ENCODE measurements at regions of chr3 and their contacts with region 1.

Region 1: DNA sequence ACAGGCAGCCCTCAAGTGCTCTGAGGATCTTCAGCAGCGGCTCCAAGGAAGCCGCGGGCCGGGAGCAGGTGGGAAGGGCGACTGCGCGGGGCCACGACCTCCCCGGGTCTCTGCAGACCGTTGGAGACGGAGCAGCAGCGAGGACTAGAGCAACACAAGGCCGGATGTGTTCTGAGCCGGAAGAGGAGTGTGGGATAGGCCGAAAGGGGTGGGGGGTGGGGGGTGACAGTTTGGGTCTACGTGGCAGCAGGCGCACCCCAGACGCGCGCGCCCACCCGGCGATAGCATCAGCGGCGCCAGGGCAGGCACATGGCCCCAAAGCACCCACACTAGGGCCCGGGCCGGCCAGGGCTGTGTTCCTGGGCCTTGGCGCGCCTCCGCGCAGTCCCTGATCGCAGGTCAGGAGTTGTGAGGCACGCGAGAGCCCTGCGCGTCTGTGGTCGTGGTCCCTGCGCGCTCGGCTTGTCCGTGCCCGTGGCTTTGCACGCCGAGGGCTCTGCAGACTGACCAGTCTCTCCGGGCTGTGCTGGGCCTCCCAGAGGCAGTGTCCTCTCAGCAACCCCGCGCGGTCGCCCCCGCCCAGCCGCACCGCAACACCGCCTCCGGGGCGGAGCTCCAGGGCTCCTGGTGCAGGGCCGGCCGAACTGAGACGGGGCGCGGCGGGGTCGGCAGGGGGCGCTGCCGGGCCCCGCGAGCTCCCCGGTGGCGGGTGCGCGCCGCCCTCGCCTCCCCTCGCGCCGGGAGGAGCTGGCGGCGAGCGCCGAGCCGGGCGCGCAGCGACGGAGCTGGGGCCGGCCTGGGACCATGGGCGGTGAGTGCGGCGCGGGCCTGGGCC is at the start of gene PXYLP1:
- DNase-seq: peak; percentile 90 to 96 (median 94)
- H3K4me3 ChIP-seq: peak within 1 kb of the TSS; percentile 54
- H3K27ac ChIP-seq: peak within 1 kb of the TSS; percentile 70 to 79
- H3K4me1 ChIP-seq: peaks cover 6% of the 10 kb centered on the region
- H3K27me3 ChIP-seq: no peaks in the 10 kb centered on the region
- CTCF ChIP-seq: peak; percentile 46 to 90 (median 89)
- EP300 ChIP-seq: no peak
- POLR2A ChIP-seq: peak; percentile 39
- total RNA-seq, gene PXYLP1: 10.3 to 23.0 (median 15.7) TPM

Region 2: DNA sequence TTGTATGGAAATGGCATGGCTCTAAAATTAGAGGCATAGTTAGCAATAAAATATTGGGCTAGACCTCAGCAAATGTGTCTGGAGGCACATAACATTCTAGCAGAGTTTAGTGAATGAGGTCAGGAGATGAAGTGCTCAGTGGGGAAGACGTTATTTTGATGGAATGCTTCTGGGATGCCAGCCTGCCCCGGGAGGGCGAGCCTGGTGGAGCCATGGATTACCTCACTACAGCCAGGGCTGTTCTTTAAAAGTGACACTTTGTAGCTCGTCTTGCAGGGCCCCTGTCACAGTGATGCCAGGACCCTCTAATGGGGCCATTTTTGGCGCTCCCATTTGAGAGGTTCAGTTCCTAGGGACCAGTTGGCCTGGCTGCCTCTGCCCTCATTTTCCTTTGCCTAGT is 48.8 kb after region 1 on chr3:
- intact Hi-C with region 1: loop called in 1 of 4 experiments (anchors 10 kb)
- DNase-seq: no peak
- H3K4me3 ChIP-seq: no peak overlapping the region
- H3K27ac ChIP-seq: no peak overlapping the region
- H3K4me1 ChIP-seq: peaks cover 1% of the 10 kb centered on the region
- H3K27me3 ChIP-seq: no peaks in the 10 kb centered on the region
- CTCF ChIP-seq: no peak
- EP300 ChIP-seq: no peak
- POLR2A ChIP-seq: no peak

Region 3: DNA sequence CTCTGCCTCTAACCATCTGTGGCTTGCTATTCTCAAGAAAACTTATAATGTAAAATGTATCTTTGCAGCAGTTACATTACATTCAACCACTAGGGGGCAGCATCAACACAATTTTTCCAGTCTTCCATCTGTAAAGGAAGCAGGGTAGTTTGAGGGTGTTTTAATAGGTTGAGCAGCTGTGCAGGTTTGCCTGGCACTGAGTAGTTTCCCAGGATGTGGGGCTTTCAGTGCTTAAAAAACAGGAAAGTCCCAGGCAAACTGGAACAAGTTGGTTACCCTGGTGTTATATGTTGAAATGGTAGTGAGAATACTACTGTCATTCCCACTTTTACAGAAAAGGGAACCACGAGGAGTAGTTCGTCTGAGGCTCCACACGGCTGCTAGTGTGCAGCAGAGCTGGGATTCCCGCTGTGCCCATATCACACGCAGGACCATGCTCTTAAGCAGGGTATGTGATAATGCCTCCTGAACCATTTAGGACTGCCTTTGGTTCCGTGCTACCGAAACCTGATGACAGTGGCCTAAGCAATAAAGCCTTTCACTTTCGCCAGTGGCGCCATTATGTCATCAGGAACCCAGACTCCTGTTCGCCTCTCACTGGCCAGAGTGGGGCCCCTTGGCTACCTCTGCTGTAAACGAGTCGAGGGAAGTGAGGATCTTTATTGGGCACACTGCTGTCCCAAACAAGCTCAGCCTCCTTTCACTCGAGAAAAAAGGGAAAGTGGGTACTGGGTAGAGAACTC is 72.3 kb after region 1 on chr3:
- intact Hi-C with region 1: loop called (anchors 5 to 10 kb)
- DNase-seq: peak in 2 of 5 donors; percentile 35 to 63
- H3K4me3 ChIP-seq: no peak overlapping the region
- H3K27ac ChIP-seq: no peak overlapping the region
- H3K4me1 ChIP-seq: no peaks in the 10 kb centered on the region
- H3K27me3 ChIP-seq: no peaks in the 10 kb centered on the region
- CTCF ChIP-seq: peak; percentile 52 to 75 (median 61)
- EP300 ChIP-seq: no peak
- POLR2A ChIP-seq: no peak

Region 4: GRCh38 chr3:141311496-141312353 is 80.4 kb after region 1 on chr3:
- intact Hi-C with region 1: loop called in 2 of 4 experiments (anchors 5 to 10 kb)
- DNase-seq: peak; percentile 97 to 98 (median 98)
- H3K4me3 ChIP-seq: peak overlapping the region; percentile 64
- H3K27ac ChIP-seq: peak overlapping the region in 1 of 2 donors; percentile 54
- H3K4me1 ChIP-seq: peaks cover 5% of the 10 kb centered on the region
- H3K27me3 ChIP-seq: no peaks in the 10 kb centered on the region
- CTCF ChIP-seq: peak; percentile 56 to 81 (median 79)
- EP300 ChIP-seq: no peak
- POLR2A ChIP-seq: peak; percentile 55

Region 5: GRCh38 chr3:141460097-141460704 is 228.9 kb after region 1 on chr3:
- intact Hi-C with region 1: loop called in 2 of 4 experiments (anchors 10 kb)
- DNase-seq: peak; percentile 84 to 92 (median 90)
- H3K4me3 ChIP-seq: no peak overlapping the region
- H3K27ac ChIP-seq: no peak overlapping the region
- H3K4me1 ChIP-seq: peaks cover 2% of the 10 kb centered on the region
- H3K27me3 ChIP-seq: no peaks in the 10 kb centered on the region
- CTCF ChIP-seq: peak; percentile 68 to 81 (median 75)
- EP300 ChIP-seq: no peak
- POLR2A ChIP-seq: no peak

Measured in ovary (tissue), 10 donors.